Uterus (tissue), 4 donors: ENCODE measurements at regions of chr1 and their contacts with region 1.

Region 1: DNA sequence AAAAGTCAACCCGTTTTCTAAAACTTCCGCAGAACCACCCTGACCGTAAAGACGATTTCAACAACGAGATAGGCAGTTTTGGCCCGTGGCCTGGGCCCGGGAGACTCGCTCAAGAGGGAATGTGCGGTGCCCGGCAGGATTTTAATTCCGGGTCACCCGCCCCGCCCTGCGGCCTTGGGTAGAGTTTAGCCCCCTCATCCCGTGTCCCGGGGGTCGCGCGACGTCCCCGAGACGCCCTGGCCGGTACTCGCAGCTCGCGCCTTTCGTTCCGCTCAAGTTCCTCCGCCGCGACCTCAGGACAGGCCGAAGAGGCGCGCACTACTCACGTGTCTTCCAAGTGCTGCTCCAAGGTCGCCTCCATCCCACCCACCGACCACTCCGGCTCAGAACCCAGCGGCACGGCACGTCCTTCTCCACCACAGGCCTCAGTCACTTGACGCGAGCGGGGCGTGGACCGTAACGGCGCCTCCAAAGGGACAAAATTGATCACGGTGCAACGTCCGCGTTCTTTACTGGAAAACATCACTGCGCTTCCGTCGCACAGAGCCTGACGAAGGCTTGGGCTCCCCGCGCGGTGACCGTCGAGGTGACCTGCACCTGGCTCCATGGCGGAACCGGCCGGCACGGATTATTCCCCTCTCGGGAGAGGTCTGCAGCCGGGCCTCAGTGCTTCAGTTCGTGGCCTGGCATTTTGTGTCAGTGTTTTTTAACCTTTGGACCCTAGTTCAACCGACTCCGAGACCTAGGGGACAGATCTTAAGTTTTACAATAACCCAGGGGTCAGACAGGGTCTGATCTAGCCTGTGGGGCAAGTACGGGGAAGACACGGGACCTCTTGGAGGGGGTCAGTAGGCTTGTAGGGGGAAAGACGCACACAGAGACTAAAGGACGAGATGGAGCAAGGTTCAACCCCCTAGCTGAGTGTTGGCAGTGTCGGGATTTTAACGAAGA is at the start of gene LAMTOR5:
- DNase-seq: peak; percentile 90 to 93
- H3K4me3 ChIP-seq: peak within 1 kb of the TSS; percentile 86 to 99
- H3K27ac ChIP-seq: peak within 1 kb of the TSS; percentile 94
- H3K4me1 ChIP-seq: peaks cover 0 to 5% of the 10 kb centered on the region in 2 donors
- H3K27me3 ChIP-seq: no peaks in the 10 kb centered on the region
- CTCF ChIP-seq: peak; percentile 5 to 47 (median 18)
- POLR2A ChIP-seq: peak; percentile 60 to 86
- total RNA-seq, gene LAMTOR5: 5.4 to 117 (median 58.5) TPM

Region 2: GRCh38 chr1:110235834-110236682 is 171.5 kb before region 1 on chr1:
- intact Hi-C with region 1: no loop called
- DNase-seq: no peak
- H3K4me3 ChIP-seq: no peak overlapping the region
- H3K27ac ChIP-seq: peak overlapping the region; percentile 45 to 70
- H3K4me1 ChIP-seq: no peaks in the 10 kb centered on the region
- H3K27me3 ChIP-seq: no peaks in the 10 kb centered on the region
- CTCF ChIP-seq: no peak
- POLR2A ChIP-seq: no peak

Region 3: GRCh38 chr1:110337704-110338308 is 69.7 kb before region 1 on chr1:
- intact Hi-C with region 1: loop called (anchors 2 kb)
- DNase-seq: peak; percentile 31 to 32
- H3K4me3 ChIP-seq: peak overlapping the region; percentile 58 to 100
- H3K27ac ChIP-seq: peak overlapping the region; percentile 99
- H3K4me1 ChIP-seq: peaks cover 7 to 11% of the 10 kb centered on the region in 2 donors
- H3K27me3 ChIP-seq: no peaks in the 10 kb centered on the region
- CTCF ChIP-seq: no peak
- POLR2A ChIP-seq: no peak

Region 4: GRCh38 chr1:110460253-110461220 is 53.0 kb after region 1 on chr1:
- intact Hi-C with region 1: no loop called
- DNase-seq: peak; percentile 73 to 78
- H3K4me3 ChIP-seq: no peak overlapping the region
- H3K27ac ChIP-seq: no peak overlapping the region
- H3K4me1 ChIP-seq: no peaks in the 10 kb centered on the region
- H3K27me3 ChIP-seq: no peaks in the 10 kb centered on the region
- CTCF ChIP-seq: peak; percentile 91 to 96 (median 93)
- POLR2A ChIP-seq: no peak

Region 5: GRCh38 chr1:110726755-110727154 is 319.2 kb after region 1 on chr1:
- intact Hi-C with region 1: no loop called
- DNase-seq: no peak
- H3K4me3 ChIP-seq: no peak overlapping the region
- H3K27ac ChIP-seq: no peak overlapping the region
- H3K4me1 ChIP-seq: no peaks in the 10 kb centered on the region
- H3K27me3 ChIP-seq: no peaks in the 10 kb centered on the region
- CTCF ChIP-seq: no peak
- POLR2A ChIP-seq: no peak